ENCODE measurements at regions of chr4 and their contacts with region 1.

Region 1: DNA sequence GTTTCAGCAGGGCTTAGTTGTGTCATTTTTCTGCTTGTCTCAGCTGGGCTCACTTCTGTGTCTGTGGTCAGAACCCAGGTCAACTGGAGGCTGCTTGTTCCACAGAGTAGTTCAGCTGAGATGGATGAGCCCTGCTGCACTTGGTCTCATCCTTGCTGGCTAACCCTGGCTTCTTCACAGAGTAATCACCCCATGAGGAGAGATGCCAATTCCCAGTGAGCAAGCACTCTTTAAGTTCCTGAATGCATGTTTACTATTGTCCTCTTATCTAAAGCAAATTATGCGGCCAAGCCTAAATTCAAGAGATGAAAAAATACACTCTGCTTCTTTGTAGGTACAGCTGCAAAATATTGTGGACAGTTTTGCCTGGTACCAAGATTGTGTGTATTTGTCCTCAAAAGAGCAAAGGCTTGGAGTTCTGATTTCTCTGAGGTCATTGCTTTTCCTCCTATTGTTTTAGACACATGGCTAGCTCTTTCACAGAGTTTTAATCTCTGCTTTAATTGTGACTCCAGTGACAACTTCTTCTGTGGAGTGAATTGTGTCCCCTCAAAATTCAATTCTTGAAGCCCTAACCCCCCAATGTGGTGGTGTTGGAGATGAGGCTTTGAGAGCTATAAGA is 236.6 kb upstream of the ANKRD50 start:
- DNase-seq: no peak
- H3K4me3 Mint-ChIP-seq: peak overlapping the region; percentile 55
- H3K27ac Mint-ChIP-seq: peak overlapping the region; percentile 63
- H3K4me1 Mint-ChIP-seq: peaks cover 52% of the 10 kb centered on the region
- H3K27me3 Mint-ChIP-seq: no peaks in the 10 kb centered on the region
- CTCF ChIP-seq: no peak

Region 2: GRCh38 chr4:124631760-124632159 is 317.3 kb before region 1 on chr4:
- CTCF ChIA-PET with region 1: no interaction called
- intact Hi-C with region 1: loop called (anchors 5 kb)
- DNase-seq: peak; percentile 60
- H3K4me3 Mint-ChIP-seq: no peak overlapping the region
- H3K27ac Mint-ChIP-seq: peak overlapping the region; percentile 75
- H3K4me1 Mint-ChIP-seq: peaks cover 19% of the 10 kb centered on the region
- H3K27me3 Mint-ChIP-seq: no peaks in the 10 kb centered on the region
- CTCF ChIP-seq: no peak

Region 3: GRCh38 chr4:124712372-124713184 is 236.5 kb before region 1 on chr4 and contains the start of gene ANKRD50:
- CTCF ChIA-PET with region 1: no interaction called
- intact Hi-C with region 1: loop called (anchors 5 kb)
- DNase-seq: peak; percentile 88
- H3K4me3 Mint-ChIP-seq: no peak within 1 kb of the TSS
- H3K27ac Mint-ChIP-seq: peak within 1 kb of the TSS; percentile 97
- H3K4me1 Mint-ChIP-seq: no peaks in the 10 kb centered on the region
- H3K27me3 Mint-ChIP-seq: no peaks in the 10 kb centered on the region
- CTCF ChIP-seq: no peak
- total RNA-seq, gene ANKRD50: 22.9 and 24.3 TPM in 2 replicates

Region 4: DNA sequence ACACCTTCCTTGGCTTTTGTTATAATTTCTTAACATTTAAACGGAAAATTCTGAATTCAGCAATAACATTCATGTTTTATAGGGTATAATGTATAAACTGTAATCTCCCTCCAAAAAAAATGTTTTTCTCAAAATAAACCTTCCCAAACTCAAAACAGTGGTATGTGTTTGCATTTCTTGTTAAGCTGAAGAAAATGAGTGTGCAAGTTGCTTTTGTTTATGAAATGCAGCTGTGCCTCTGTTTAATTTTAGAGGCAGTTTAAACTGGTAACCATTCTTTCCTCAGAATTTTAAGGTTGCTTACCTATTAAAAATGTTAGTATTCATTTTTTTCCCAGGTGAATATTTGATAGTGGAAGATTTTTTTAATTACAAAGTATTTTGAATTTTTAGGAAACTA is 131.6 kb before region 1 on chr4:
- CTCF ChIA-PET with region 1: no interaction called
- intact Hi-C with region 1: no loop called
- DNase-seq: no peak
- H3K4me3 Mint-ChIP-seq: no peak overlapping the region
- H3K27ac Mint-ChIP-seq: no peak overlapping the region
- H3K4me1 Mint-ChIP-seq: no peaks in the 10 kb centered on the region
- H3K27me3 Mint-ChIP-seq: no peaks in the 10 kb centered on the region
- CTCF ChIP-seq: no peak

Region 5: GRCh38 chr4:124903995-124904722 is 44.9 kb before region 1 on chr4:
- CTCF ChIA-PET with region 1: no interaction called
- intact Hi-C with region 1: loop called (anchors 1 kb)
- DNase-seq: peak; percentile 26
- H3K4me3 Mint-ChIP-seq: no peak overlapping the region
- H3K27ac Mint-ChIP-seq: no peak overlapping the region
- H3K4me1 Mint-ChIP-seq: no peaks in the 10 kb centered on the region
- H3K27me3 Mint-ChIP-seq: no peaks in the 10 kb centered on the region
- CTCF ChIP-seq: no peak

Region 6: DNA sequence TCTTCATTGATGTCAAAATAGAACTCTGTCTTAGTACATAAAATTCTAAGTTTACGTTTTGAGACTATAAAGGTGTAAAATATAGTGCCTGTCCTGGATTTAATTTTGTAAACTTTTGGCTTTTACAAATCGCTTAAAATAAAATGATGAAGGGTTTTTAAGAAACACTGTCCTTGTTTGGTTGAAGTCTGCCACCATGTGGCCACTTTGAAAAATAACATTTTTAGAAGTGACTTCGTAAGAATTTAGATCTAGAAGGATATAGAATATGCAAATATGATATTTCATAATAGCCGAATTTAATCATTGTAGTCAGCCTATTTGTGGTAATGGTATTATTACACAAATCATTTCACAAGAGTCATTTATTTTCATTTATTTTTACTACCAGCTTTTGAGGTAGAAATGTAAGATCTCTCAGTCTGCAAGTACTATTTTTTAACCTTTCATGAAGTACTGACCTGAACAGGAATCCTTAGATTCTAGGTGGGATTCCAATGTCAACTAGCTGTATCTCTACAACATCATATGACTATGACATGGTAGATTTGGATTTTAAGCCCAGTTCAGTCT is 334.7 kb after region 1 on chr4:
- CTCF ChIA-PET with region 1: no interaction called
- intact Hi-C with region 1: no loop called
- DNase-seq: peak; percentile 1
- H3K4me3 Mint-ChIP-seq: no peak overlapping the region
- H3K27ac Mint-ChIP-seq: no peak overlapping the region
- H3K4me1 Mint-ChIP-seq: no peaks in the 10 kb centered on the region
- H3K27me3 Mint-ChIP-seq: no peaks in the 10 kb centered on the region
- CTCF ChIP-seq: peak; percentile 30

Measured in Calu3 (cell line).